T-cell (primary cell): ENCODE measurements at regions of chr7 and their contacts with region 1.

Region 1: DNA sequence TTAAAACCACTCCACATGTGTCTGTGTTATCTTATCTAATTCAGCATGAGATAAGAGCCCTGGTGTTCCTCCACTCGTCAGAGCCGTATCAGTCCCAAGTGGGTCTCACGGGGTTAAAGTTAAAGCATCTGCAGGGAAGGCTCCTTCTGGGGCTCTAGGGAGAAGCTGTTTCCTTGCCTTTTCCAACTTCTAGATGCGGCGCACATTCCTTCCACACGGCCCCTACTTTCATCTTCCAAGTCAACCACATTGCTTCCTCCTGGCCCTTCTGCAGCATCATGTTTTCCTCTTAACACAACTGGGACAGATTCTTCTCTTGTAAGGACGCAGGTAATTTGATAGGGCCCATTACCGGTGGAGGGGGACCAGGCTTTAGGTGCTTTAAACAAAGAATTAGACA is 620.1 kb upstream of the DPP6 start:
- DNase-seq: no peak
- ATAC-seq: no peak
- H3K4me3 ChIP-seq: no peak overlapping the region
- H3K4me3 Mint-ChIP-seq: no peak overlapping the region
- H3K27ac ChIP-seq: no peak overlapping the region
- H3K27ac Mint-ChIP-seq: no peak overlapping the region
- H3K4me1 ChIP-seq: no peaks in the 10 kb centered on the region
- H3K4me1 Mint-ChIP-seq: no peaks in the 10 kb centered on the region
- H3K27me3 ChIP-seq: no peaks in the 10 kb centered on the region
- H3K27me3 Mint-ChIP-seq: no peaks in the 10 kb centered on the region

Region 2: DNA sequence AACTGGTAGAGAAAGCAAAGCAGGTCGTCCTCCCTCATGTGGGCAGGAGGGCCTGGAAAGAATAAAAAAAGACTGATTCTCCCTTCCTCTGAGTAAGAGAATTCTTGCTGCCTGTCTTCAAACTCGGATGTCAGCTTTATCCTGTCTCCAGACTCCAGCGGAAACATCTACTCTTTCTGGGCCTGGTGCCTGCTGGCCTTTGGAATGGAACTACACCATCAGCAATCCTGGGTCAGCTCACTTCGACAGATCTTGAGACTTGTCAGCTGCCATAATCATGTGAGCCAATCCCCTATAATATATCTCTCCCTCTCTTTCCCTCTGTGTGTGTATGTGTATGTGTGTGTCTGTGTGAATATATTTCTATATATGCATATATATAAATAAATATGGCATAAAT is 209.1 kb after region 1 on chr7:
- CTCF ChIA-PET with region 1: no interaction called
- POLR2A ChIA-PET with region 1: interaction called in 1 of 2 experiments, 11 read pairs
- DNase-seq: no peak
- ATAC-seq: no peak
- H3K4me3 ChIP-seq: no peak overlapping the region
- H3K4me3 Mint-ChIP-seq: no peak overlapping the region
- H3K27ac ChIP-seq: no peak overlapping the region
- H3K27ac Mint-ChIP-seq: no peak overlapping the region
- H3K4me1 ChIP-seq: no peaks in the 10 kb centered on the region
- H3K4me1 Mint-ChIP-seq: no peaks in the 10 kb centered on the region
- H3K27me3 ChIP-seq: no peaks in the 10 kb centered on the region
- H3K27me3 Mint-ChIP-seq: no peaks in the 10 kb centered on the region